ENCODE measurements at regions of chr6 and their contacts with region 1.

Region 1: GRCh38 chr6:149565527-149566409 is at the start of gene GINM1:
- DNase-seq: peak; percentile 97
- H3K4me3 Mint-ChIP-seq: peak within 1 kb of the TSS; percentile 91
- H3K27ac Mint-ChIP-seq: peak within 1 kb of the TSS; percentile 82
- H3K4me1 Mint-ChIP-seq: peaks cover 15% of the 10 kb centered on the region
- H3K27me3 Mint-ChIP-seq: peaks cover 2% of the 10 kb centered on the region
- total RNA-seq, gene GINM1: 15.6 to 16.0 TPM

Region 2: DNA sequence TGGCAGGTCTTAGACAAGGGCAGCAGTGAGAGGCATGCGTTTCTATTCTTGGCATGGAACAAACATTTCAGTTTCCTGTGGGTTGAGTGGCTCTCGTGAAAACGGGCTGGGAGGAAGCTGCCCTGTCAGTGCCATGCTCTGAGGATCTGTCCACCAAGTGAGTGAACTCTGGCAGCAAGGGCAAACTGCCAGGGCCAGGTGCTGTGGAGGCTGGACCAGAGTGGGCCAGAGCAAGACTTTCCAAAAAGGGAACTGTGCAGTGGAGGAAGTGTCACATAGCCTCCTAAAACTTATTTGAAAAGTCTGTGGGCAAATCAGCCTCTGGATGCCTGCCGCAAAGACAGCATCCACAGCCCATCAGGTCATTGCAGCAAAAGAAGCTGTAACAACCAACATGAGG is 292.4 kb before region 1 on chr6:
- CTCF ChIA-PET with region 1: no interaction called
- POLR2A ChIA-PET with region 1: no interaction called
- intact Hi-C with region 1: no loop called
- DNase-seq: peak; percentile 34
- H3K4me3 Mint-ChIP-seq: no peak overlapping the region
- H3K27ac Mint-ChIP-seq: peak overlapping the region; percentile 61
- H3K4me1 Mint-ChIP-seq: peaks cover 39% of the 10 kb centered on the region
- H3K27me3 Mint-ChIP-seq: no peaks in the 10 kb centered on the region

Region 3: DNA sequence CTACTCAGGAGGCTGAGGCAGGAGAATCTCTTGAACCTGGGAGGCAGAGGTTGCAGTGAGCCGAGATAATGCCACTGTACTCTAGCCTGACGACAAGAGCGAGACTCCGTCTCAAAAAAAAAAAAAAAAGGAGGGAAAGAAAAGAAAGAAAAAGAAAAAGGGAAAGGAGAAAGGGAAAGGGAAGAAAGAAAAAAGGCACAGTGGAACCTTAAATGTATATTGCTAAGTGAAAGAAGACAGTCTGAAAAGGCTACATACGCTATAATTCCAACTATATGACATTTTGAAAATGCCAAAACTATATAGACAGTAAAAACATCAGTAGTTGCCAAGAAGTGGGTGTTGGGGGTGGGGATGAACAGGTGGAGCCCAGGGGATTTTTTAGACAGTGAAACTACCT is 36.1 kb before region 1 on chr6:
- CTCF ChIA-PET with region 1: no interaction called
- POLR2A ChIA-PET with region 1: no interaction called
- intact Hi-C with region 1: no loop called
- DNase-seq: no peak
- H3K4me3 Mint-ChIP-seq: no peak overlapping the region
- H3K27ac Mint-ChIP-seq: no peak overlapping the region
- H3K4me1 Mint-ChIP-seq: peaks cover 25% of the 10 kb centered on the region
- H3K27me3 Mint-ChIP-seq: no peaks in the 10 kb centered on the region

Region 4: GRCh38 chr6:149545754-149546528 is 19.8 kb before region 1 on chr6 and contains the start of gene PPIL4:
- CTCF ChIA-PET with region 1: interaction called, 9 read pairs
- POLR2A ChIA-PET with region 1: interaction called, 8 read pairs
- intact Hi-C with region 1: loop called (anchors 1 kb)
- DNase-seq: peak; percentile 97
- H3K4me3 Mint-ChIP-seq: peak within 1 kb of the TSS; percentile 97
- H3K27ac Mint-ChIP-seq: peak within 1 kb of the TSS; percentile 97
- H3K4me1 Mint-ChIP-seq: peaks cover 38% of the 10 kb centered on the region
- H3K27me3 Mint-ChIP-seq: peaks cover 4% of the 10 kb centered on the region
- total RNA-seq, gene PPIL4: 21.5 to 23.6 TPM

Region 5: GRCh38 chr6:149686230-149686629 is 120.5 kb after region 1 on chr6:
- CTCF ChIA-PET with region 1: interaction called, 6 read pairs
- POLR2A ChIA-PET with region 1: no interaction called
- intact Hi-C with region 1: loop called (anchors 2 kb)
- DNase-seq: no peak
- H3K4me3 Mint-ChIP-seq: no peak overlapping the region
- H3K27ac Mint-ChIP-seq: peak overlapping the region; percentile 52
- H3K4me1 Mint-ChIP-seq: peaks cover 19% of the 10 kb centered on the region
- H3K27me3 Mint-ChIP-seq: no peaks in the 10 kb centered on the region

Region 6: DNA sequence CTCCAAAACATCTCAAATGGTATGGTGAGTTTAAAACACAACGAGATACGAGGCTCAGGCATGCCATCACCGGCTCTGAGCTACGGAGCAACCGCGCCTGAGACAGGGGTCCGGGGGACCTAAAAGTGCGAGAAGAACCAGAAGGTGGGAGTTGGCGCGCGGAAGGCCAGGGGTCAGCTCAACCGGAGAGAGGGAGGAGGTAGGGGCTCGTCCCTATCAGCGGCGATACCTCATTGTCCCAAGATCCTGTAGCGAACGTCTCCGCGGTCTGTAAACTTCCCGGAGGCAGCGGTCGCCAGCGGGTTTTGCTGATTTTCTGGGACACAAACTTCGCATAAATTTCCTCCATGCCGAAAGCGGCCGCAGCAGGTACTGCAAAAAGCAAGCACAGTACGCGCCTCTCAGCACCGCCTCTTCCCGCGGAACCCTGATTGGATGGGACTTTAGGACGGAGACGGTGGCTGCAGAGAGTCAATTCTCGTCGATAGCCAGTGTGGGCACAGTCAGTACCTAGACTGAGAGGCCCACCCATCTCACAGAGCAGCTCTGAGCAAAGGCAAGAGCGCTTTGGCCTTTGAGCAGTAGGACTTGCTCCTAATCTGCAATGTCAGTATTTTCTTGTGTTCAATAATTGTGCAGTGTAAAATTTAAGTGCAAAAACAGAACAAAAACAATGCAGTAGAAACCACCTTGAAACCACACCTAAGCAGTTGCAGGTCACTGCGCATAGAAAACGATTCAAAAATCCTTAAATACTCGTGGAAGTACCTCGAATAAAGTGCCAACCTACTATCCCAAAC is 180.6 kb after region 1 on chr6 and contains the start of gene NUP43:
- CTCF ChIA-PET with region 1: no interaction called
- POLR2A ChIA-PET with region 1: no interaction called
- intact Hi-C with region 1: loop called (anchors 1 kb)
- DNase-seq: peak; percentile 97
- H3K4me3 Mint-ChIP-seq: peak within 1 kb of the TSS; percentile 98
- H3K27ac Mint-ChIP-seq: peak within 1 kb of the TSS; percentile 85
- H3K4me1 Mint-ChIP-seq: peaks cover 28% of the 10 kb centered on the region
- H3K27me3 Mint-ChIP-seq: no peaks in the 10 kb centered on the region
- total RNA-seq, gene NUP43: 64.3 to 69.8 TPM

Region 7: DNA sequence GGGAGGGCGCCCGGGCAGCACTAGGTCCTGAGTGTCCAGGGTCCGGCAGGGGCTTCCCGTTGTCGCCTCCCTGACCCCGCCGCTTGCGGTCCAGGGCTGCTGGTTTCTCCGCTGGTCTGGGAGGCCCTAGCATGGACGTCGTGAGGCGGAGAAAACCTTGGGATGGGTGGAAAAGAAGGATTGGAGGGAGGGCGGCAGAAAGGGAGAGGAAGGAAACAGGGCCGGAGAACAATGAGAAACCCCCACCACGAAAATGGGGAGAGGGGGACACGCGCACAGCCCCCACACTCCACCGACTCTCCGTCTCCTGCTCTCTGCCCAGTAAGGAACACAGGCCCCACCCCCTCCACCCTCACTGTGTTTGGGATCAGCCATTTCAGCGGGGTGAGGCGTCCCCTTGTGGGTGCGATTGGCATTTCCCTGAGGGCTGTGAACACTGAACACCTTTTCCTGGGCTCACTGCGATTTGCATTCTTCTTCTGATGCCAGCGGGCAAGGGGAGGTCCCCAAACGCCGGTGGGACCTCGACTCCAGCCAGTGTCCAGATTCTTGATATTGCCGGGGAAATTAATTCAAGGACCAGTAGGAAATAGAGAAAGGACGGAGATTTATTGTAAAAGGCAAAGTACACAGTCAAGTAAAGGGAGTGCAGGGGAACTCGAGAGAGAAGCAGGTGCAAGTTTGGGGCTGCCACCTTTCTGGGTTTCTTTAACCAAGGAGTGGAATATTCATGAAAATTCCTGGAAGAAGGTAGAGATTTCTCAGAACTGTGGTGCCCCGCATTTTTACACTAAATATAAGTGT is 360.4 kb after region 1 on chr6:
- CTCF ChIA-PET with region 1: no interaction called
- POLR2A ChIA-PET with region 1: no interaction called
- intact Hi-C with region 1: loop called (anchors 5 kb)
- DNase-seq: peak; percentile 90
- H3K4me3 Mint-ChIP-seq: peak overlapping the region; percentile 51
- H3K27ac Mint-ChIP-seq: no peak overlapping the region
- H3K4me1 Mint-ChIP-seq: peaks cover 26% of the 10 kb centered on the region
- H3K27me3 Mint-ChIP-seq: peaks cover 83% of the 10 kb centered on the region

Region 8: DNA sequence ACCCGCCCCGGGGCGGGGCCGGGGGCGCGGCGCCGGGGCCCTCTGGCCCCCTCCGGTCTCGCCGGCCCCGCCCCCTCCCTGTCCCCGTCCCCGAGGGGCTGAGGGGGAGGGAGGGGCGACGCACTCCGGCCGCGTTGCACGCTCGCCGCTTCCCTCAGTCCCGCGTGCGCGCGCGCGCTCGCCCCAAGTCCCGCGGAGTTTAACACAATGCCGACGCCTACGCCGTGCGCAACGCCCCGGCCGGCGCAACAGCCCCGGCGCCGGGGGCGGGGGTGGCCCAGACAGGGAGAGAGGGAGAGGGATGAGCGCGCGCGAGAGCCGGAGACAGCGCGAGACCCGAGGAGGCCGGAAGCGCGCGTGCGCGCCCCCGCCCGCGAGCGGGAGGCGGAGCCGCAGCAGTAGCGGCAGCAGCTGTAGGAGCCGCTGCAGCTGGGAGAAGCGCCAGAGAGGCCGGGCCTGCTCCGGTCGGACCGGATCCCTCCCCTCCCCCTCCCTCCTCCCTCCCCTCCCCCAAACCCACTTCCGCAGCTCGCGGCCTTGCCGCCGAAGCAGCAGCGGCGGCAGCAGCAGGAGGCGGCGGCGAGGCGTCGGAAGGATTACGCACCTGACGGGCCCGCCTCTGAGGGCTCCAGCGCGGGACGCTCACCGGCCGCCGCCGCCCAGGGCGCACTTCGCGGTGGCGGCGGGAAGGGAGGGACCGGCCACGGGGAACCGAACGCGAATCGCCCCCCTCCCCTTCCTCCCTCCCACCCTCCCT is 1824.7 kb after region 1 on chr6:
- CTCF ChIA-PET with region 1: no interaction called
- POLR2A ChIA-PET with region 1: no interaction called
- intact Hi-C with region 1: loop called (anchors 5 kb)
- DNase-seq: peak; percentile 99
- H3K4me3 Mint-ChIP-seq: peak overlapping the region; percentile 98
- H3K27ac Mint-ChIP-seq: peak overlapping the region; percentile 72
- H3K4me1 Mint-ChIP-seq: peaks cover 63% of the 10 kb centered on the region
- H3K27me3 Mint-ChIP-seq: no peaks in the 10 kb centered on the region